Activated T-helper 2 cell treated with anti-CD3 and anti-CD28 coated beads, Interferon-gamma antibody, Interleukin-2, Interleukin-4, amounts not matched to agents 10 μg/mL and 5 μg/mL and 100 μg/mL, durations not matched to agents 14 hours and 24 hours and 36 hours (primary cell): ENCODE measurements at regions of chr3 and their contacts with region 1.

Region 1: DNA sequence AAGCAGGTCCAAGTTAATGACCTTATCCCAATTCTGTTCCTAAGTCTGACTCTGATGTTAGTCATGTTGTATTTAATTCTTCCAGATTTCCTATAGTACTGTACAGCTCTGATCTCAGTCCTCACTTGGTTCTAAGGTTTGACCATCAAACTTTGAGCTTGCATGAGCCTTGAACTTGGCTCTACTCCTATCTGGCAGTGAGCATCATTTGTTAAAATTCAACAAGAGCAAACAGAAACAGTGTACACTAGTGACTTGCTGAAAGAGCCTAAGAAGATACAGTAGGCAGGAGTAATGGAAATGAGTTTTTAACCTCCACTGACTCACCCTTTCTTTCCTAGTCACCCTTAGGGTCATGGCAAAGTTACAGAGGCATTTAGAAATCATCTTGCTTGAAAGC is 451.1 kb upstream of the TPRG1 start:
- DNase-seq: no peak
- H3K4me3 Mint-ChIP-seq: no peak overlapping the region
- H3K27ac Mint-ChIP-seq: no peak overlapping the region
- H3K4me1 Mint-ChIP-seq: peaks cover 27% of the 10 kb centered on the region
- H3K27me3 Mint-ChIP-seq: no peaks in the 10 kb centered on the region

Region 2: DNA sequence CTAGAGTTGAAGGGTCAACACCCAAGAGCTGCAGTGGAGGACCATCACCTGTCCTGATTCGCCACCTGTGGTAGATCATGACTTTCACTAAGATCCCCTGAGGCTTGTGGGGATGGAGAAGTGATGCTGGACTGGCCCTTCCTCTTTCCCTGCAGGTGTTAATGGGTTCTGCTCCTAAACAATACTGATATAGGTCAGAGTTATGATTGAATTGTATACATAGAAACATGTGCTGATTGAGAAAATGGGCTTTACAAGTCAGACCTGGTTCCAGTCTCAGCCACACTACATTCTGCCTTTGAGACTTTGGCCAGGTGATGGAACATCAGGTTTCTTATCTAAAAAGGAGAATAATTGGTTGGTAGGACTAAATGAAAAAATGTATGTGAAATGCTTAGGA is 32.2 kb after region 1 on chr3:
- intact Hi-C with region 1: loop called (anchors 1 kb)
- DNase-seq: no peak
- H3K4me3 Mint-ChIP-seq: no peak overlapping the region
- H3K27ac Mint-ChIP-seq: no peak overlapping the region
- H3K4me1 Mint-ChIP-seq: peaks cover 19% of the 10 kb centered on the region
- H3K27me3 Mint-ChIP-seq: peaks cover 3% of the 10 kb centered on the region